IMR-90 (cell line): ENCODE measurements at regions of chr3 and their contacts with region 1.

Region 1: GRCh38 chr3:170171563-170171962 is 10.0 kb downstream of the PHC3 start:
- DNase-seq: no peak
- ATAC-seq: no peak
- H3K4me3 ChIP-seq: no peak overlapping the region
- H3K27ac ChIP-seq: no peak overlapping the region
- H3K4me1 ChIP-seq: no peaks in the 10 kb centered on the region
- H3K27me3 ChIP-seq: no peaks in the 10 kb centered on the region
- CTCF ChIP-seq: no peak
- POLR2A ChIP-seq: no peak
- RAD21 ChIP-seq: no peak

Region 2: GRCh38 chr3:170109579-170110570 is 61.7 kb before region 1 on chr3:
- CTCF ChIA-PET with region 1: no interaction called
- POLR2A ChIA-PET with region 1: no interaction called
- dilution Hi-C with region 1: no loop called
- in situ Hi-C with region 1: no loop called
- intact Hi-C with region 1: loop called (anchors 5 kb)
- DNase-seq: no peak
- ATAC-seq: no peak
- H3K4me3 ChIP-seq: no peak overlapping the region
- H3K27ac ChIP-seq: no peak overlapping the region
- H3K4me1 ChIP-seq: no peaks in the 10 kb centered on the region
- H3K27me3 ChIP-seq: no peaks in the 10 kb centered on the region
- CTCF ChIP-seq: no peak
- POLR2A ChIP-seq: no peak
- RAD21 ChIP-seq: no peak